ENCODE measurements at regions of chr16 and their contacts with region 1.

Region 1: DNA sequence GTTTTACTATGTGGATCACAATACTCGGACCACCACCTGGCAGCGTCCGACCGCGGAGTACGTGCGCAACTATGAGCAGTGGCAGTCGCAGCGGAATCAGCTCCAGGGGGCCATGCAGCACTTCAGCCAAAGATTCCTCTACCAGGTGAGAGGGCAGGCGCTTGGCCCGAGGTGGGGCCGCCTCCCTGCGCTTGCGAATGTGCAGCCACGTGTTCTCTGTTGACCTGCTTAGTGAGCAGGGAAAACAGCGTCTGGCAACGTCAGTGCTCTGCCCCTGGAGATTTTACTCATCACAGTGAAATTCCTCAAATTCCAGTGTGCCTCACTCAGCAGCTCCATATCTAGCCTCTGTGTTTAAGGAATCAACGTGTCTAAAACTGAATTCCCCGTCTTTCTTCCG is 33.4 kb upstream of the CLEC18A start:
- DNase-seq: peak; percentile 99
- ATAC-seq: peak; percentile 99
- H3K4me3 ChIP-seq: peak overlapping the region; percentile 47; the same call in 1 of the 2 replicates
- H3K27ac ChIP-seq: peak overlapping the region; percentile 73
- H3K4me1 ChIP-seq: peaks cover 11% of the 10 kb centered on the region
- H3K27me3 ChIP-seq: no peaks in the 10 kb centered on the region
- CTCF ChIP-seq: no peak
- POLR2A ChIP-seq: no peak
- RAD21 ChIP-seq: no peak

Region 2: GRCh38 chr16:69796351-69797118 is 121.2 kb before region 1 on chr16:
- CTCF ChIA-PET with region 1: no interaction called
- POLR2A ChIA-PET with region 1: no interaction called
- dilution Hi-C with region 1: no loop called
- in situ Hi-C with region 1: no loop called
- intact Hi-C with region 1: no loop called
- DNase-seq: peak; percentile 77
- ATAC-seq: peak; percentile 94
- H3K4me3 ChIP-seq: no peak overlapping the region
- H3K27ac ChIP-seq: no peak overlapping the region
- H3K4me1 ChIP-seq: peaks cover 10% of the 10 kb centered on the region
- H3K27me3 ChIP-seq: no peaks in the 10 kb centered on the region
- CTCF ChIP-seq: peak; percentile 94
- POLR2A ChIP-seq: no peak
- RAD21 ChIP-seq: peak; percentile 96

Region 3: DNA sequence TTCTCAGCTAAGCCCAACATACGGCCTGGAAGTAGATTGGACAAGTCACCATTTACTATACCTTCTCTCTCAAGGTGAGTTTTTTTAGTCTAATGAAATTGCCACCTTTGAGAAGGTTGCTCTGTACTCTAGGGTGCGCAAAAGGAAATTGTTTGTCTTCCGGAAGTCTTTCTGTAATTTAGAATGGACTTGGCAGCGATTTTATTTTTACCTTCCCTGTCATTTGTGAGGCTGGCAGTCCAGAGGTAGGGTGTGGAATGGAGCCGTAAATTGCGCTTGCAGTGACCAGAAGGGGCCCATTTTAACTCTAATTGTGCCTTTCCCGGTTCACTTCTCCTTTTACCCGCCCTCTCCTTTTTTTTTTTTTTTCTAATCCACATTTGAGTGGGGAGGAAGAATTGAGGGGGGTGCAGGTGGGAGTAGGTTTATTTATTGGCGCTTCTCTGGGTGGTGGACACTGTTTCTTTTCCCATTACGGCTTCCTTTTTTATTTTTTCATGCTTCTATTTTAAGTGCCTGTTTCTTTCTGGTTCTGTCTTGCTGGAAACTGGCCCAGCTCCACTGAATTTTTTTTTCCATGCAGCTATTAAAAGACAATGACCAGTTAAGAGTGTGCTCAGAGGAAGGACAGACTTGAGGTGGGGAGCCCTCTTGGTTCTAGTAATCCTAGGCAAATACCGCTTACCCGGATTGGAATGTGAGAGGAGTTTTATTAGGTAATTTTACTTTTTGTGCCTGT is 56.3 kb before region 1 on chr16:
- CTCF ChIA-PET with region 1: interaction called, 3 read pairs
- POLR2A ChIA-PET with region 1: no interaction called
- dilution Hi-C with region 1: no loop called
- in situ Hi-C with region 1: no loop called
- intact Hi-C with region 1: loop called (anchors 5 kb)
- DNase-seq: peak; percentile 75
- ATAC-seq: peak; percentile 50; the same call in 1 of the 2 replicates
- H3K4me3 ChIP-seq: no peak overlapping the region
- H3K27ac ChIP-seq: no peak overlapping the region
- H3K4me1 ChIP-seq: 0 out of 2 replicates have a peak, but pooled peaks cover 5% of the 10 kb centered on the region
- H3K27me3 ChIP-seq: no peaks in the 10 kb centered on the region
- CTCF ChIP-seq: no peak
- POLR2A ChIP-seq: no peak
- RAD21 ChIP-seq: no peak

Region 4: GRCh38 chr16:69880640-69881133 is 37.1 kb before region 1 on chr16:
- CTCF ChIA-PET with region 1: no interaction called
- POLR2A ChIA-PET with region 1: no interaction called
- dilution Hi-C with region 1: no loop called
- in situ Hi-C with region 1: no loop called
- intact Hi-C with region 1: loop called (anchors 5 kb)
- DNase-seq: peak; percentile 44
- ATAC-seq: peak; percentile 48
- H3K4me3 ChIP-seq: no peak overlapping the region
- H3K27ac ChIP-seq: no peak overlapping the region
- H3K4me1 ChIP-seq: peaks cover 5% of the 10 kb centered on the region
- H3K27me3 ChIP-seq: no peaks in the 10 kb centered on the region
- CTCF ChIP-seq: no peak
- POLR2A ChIP-seq: no peak
- RAD21 ChIP-seq: no peak

Region 5: GRCh38 chr16:70306880-70307279 is 389.1 kb after region 1 on chr16:
- CTCF ChIA-PET with region 1: no interaction called
- POLR2A ChIA-PET with region 1: no interaction called
- dilution Hi-C with region 1: no loop called
- in situ Hi-C with region 1: no loop called
- intact Hi-C with region 1: no loop called
- DNase-seq: no peak
- ATAC-seq: no peak
- H3K4me3 ChIP-seq: no peak overlapping the region
- H3K27ac ChIP-seq: no peak overlapping the region
- H3K4me1 ChIP-seq: no peaks in the 10 kb centered on the region
- H3K27me3 ChIP-seq: no peaks in the 10 kb centered on the region
- CTCF ChIP-seq: no peak
- POLR2A ChIP-seq: no peak
- RAD21 ChIP-seq: no peak